ENCODE measurements at regions of chr11 and their contacts with region 1.

Region 1: GRCh38 chr11:27124514-27125264 is 84.1 kb downstream of the BBOX1 start:
- DNase-seq: peak; percentile 4
- ATAC-seq: peak; percentile 62; the same call in 2 of the 3 replicates
- H3K4me3 ChIP-seq: no peak overlapping the region
- H3K27ac ChIP-seq: no peak overlapping the region
- H3K4me1 ChIP-seq: no peaks in the 10 kb centered on the region
- H3K27me3 ChIP-seq: no peaks in the 10 kb centered on the region
- CTCF ChIP-seq: peak; percentile 40
- EP300 ChIP-seq: no peak
- POLR2A ChIP-seq: no peak
- RAD21 ChIP-seq: no peak

Region 2: GRCh38 chr11:26947379-26947844 is 177.3 kb before region 1 on chr11:
- CTCF ChIA-PET with region 1: no interaction called
- POLR2A ChIA-PET with region 1: no interaction called
- in situ Hi-C with region 1: no loop called
- intact Hi-C with region 1: no loop called
- DNase-seq: no peak
- ATAC-seq: no peak
- H3K4me3 ChIP-seq: no peak overlapping the region
- H3K27ac ChIP-seq: no peak overlapping the region
- H3K4me1 ChIP-seq: no peaks in the 10 kb centered on the region
- H3K27me3 ChIP-seq: no peaks in the 10 kb centered on the region
- CTCF ChIP-seq: no peak
- EP300 ChIP-seq: no peak
- POLR2A ChIP-seq: no peak
- RAD21 ChIP-seq: no peak

Region 3: DNA sequence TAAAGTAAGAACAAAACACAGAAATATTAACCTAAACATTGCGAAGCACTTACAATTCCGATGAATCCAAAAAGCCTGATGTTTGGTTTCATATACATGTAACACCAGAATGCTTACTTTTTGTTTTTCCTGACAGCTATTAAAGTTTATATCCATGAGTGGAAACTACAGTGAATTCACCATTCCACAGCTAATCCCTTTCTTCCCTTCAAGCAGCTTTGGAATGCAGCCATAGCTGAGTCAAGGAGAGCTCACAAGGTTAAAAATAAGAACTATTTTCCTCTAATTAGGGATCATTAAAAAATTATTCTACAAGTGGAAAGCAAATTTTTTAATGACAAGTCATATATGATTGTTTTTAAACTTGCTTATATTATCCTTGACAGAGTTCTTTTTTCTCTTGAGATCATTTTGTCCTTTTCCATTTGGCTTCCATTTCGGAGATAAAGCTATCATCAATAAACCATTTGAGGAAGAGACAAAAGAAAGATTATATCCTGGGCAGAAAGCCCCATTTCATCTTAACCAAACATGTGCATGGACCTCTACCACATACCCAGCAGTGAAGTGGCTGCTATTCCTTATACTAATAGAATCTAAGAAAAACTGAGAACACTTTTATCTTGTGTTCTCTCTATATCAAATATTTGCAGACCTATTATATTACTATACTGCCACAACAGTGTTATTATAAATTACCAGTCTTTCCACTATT is 150.5 kb before region 1 on chr11:
- CTCF ChIA-PET with region 1: no interaction called
- POLR2A ChIA-PET with region 1: no interaction called
- in situ Hi-C with region 1: no loop called
- intact Hi-C with region 1: loop called (anchors 10 kb)
- DNase-seq: no peak
- ATAC-seq: no peak
- H3K4me3 ChIP-seq: no peak overlapping the region
- H3K27ac ChIP-seq: no peak overlapping the region
- H3K4me1 ChIP-seq: no peaks in the 10 kb centered on the region
- H3K27me3 ChIP-seq: no peaks in the 10 kb centered on the region
- CTCF ChIP-seq: no peak
- EP300 ChIP-seq: no peak
- POLR2A ChIP-seq: no peak
- RAD21 ChIP-seq: no peak

Region 4: GRCh38 chr11:27138716-27139115 is 14.0 kb after region 1 on chr11:
- CTCF ChIA-PET with region 1: no interaction called
- POLR2A ChIA-PET with region 1: no interaction called
- in situ Hi-C with region 1: no loop called
- intact Hi-C with region 1: no loop called
- DNase-seq: no peak
- ATAC-seq: no peak
- H3K4me3 ChIP-seq: no peak overlapping the region
- H3K27ac ChIP-seq: no peak overlapping the region
- H3K4me1 ChIP-seq: no peaks in the 10 kb centered on the region
- H3K27me3 ChIP-seq: no peaks in the 10 kb centered on the region
- CTCF ChIP-seq: no peak
- EP300 ChIP-seq: no peak
- POLR2A ChIP-seq: no peak
- RAD21 ChIP-seq: no peak

Measured in HepG2 (cell line).